ENCODE measurements at regions of chr16 and their contacts with region 1.

Region 1: GRCh38 chr16:9258423-9259051 is 167.1 kb downstream of the HAPSTR1 start:
- DNase-seq: peak; percentile 61
- H3K4me3 Mint-ChIP-seq: no peak overlapping the region
- H3K27ac Mint-ChIP-seq: no peak overlapping the region
- H3K4me1 Mint-ChIP-seq: peaks cover 27% of the 10 kb centered on the region
- H3K27me3 Mint-ChIP-seq: peaks cover 37% of the 10 kb centered on the region
- CTCF ChIP-seq: peak; percentile 81

Region 2: GRCh38 chr16:9797306-9797705 is 538.8 kb after region 1 on chr16:
- CTCF ChIA-PET with region 1: no interaction called
- intact Hi-C with region 1: loop called (anchors 10 kb)
- DNase-seq: peak; percentile 80
- H3K4me3 Mint-ChIP-seq: peak overlapping the region; percentile 46
- H3K27ac Mint-ChIP-seq: peak overlapping the region; percentile 93
- H3K4me1 Mint-ChIP-seq: peaks cover 28% of the 10 kb centered on the region
- H3K27me3 Mint-ChIP-seq: no peaks in the 10 kb centered on the region
- CTCF ChIP-seq: no peak

Region 3: DNA sequence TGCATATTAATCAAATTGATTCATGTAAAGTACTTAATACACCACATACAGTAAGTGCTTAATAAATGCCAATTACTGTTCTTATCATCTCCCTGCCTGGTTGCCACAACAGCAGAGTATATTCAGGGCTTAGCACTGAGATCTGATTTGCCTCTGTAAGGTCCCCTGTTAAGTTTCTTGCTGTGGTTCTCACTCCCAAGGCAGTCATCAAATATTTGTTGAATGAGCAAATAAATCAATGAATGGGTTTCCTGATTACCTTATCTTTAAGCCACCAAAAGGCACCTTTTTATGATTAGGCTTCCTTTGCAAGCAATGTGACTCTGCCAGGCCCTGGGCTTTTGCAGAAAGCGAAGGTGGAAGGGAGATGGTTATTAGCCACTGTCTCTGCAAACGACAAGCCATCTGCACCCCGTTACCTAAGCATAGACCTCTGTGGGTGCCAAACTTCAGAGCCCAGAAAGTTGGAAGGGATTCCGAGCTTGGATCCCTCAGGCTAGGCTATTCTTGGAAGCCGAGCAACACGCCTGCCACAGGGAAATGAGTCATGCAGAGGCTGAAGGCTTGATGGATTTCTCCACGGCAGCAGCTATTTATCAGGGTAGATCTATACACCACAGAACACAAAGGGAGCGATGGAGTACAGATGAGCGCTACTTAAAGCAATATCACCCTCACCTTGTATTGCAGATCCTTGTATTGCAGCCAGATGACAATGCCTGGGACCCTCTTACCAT is 821.7 kb after region 1 on chr16:
- CTCF ChIA-PET with region 1: no interaction called
- intact Hi-C with region 1: loop called (anchors 5 kb)
- DNase-seq: peak; percentile 81
- H3K4me3 Mint-ChIP-seq: peak overlapping the region; percentile 54
- H3K27ac Mint-ChIP-seq: peak overlapping the region; percentile 94
- H3K4me1 Mint-ChIP-seq: peaks cover 88% of the 10 kb centered on the region
- H3K27me3 Mint-ChIP-seq: no peaks in the 10 kb centered on the region
- CTCF ChIP-seq: no peak

Measured in Calu3 (cell line).